ENCODE measurements at regions of chr1 and their contacts with region 1.

Region 1: DNA sequence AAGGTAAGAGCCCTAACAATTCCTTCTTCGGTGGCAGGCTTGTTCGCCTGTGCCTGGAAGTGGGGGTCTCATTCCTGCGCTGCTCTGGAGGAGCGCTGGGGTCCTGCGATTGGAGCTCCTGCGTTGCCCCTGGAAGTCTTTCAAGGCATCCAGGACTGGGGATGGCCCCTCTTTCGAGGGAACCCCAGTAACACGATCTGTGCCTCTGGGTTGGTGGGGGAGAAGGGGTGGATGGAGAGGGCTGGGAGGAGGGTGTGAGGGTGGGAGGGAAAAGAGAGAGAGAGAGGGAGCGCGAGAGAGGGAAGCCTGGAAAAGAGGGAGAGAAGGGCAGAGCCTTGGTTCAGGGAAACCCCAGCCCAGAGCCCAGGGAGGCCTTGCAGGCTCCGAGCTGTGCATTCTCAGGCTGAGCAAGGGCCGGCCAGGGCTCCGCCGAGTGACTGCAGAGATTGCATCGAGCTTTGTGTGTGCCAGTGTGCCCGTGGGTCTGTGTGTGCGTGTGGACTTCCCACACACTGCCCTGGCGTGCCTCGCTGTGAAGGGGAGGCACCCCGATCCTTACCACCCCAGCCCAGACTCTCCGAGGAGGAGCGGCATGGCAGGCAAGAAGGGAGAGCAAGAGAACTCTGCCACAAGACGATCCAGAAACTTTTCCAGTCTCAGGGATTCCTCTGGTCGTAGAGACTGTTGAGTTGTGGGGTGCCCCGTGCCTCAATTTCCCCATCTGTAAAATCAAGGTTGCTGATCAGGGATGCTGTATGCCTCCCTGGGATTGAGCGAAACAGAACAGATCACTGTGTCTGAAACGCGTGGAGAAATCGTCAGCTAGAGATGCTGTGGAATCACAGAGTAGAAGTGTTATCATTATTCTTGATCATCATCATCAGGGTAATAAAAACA is 619 bp downstream of the BCL9 start:
- DNase-seq: peak; percentile 46 to 58 (median 52)
- ATAC-seq: peak; percentile 49
- H3K4me3 ChIP-seq: peak overlapping the region; percentile 34 to 41
- H3K27ac ChIP-seq: peak overlapping the region; percentile 79 to 90 (median 81)
- H3K4me1 ChIP-seq: peaks cover 25% of the 10 kb centered on the region
- H3K27me3 ChIP-seq: no peaks in the 10 kb centered on the region
- CTCF ChIP-seq: no peak
- POLR2A ChIP-seq: peak in 2 of 3 donors; percentile 17 to 44

Region 2: DNA sequence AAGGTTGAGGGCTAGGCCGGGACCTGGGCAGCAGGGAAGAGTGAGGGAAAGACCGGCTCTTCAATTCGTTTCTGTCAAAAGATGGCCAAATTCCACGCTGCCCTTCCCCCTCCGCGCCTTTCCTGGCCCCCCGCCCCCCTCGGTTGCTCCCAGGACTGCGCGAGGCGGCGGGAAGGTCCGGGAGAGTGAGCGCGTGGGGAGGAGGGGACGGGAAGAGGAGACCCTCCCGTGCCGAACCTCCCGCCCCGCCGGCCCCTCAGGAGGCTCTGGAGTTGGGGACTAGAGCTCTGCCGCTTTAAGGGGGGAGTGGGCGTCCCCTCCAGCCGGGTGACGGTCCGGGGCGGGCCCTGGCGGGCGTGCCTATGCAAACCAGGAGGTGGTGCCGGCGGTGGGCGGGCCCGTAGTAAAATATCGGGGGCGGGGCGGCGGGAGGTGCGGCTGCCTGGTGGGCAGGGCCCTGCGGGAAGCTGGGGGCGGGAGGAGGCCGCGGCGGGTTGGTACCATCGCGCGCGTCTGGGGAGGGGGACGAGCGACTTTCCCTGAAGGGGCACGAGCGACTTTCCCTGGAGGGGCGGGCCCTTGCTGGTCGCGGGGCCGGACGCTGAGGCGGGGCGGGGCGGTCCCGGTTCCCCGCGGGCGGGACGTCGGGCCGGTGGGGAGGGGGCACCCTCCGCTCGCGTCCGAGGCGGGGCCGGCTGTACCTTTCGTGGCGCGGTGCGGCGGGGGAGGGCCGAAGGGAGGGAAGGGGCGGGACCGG is 57.6 kb after region 1 on chr1:
- intact Hi-C with region 1: loop called (anchors 5 kb)
- DNase-seq: peak; percentile 98
- ATAC-seq: peak; percentile 89
- H3K4me3 ChIP-seq: peak overlapping the region; percentile 52 to 68
- H3K27ac ChIP-seq: peak overlapping the region; percentile 85 to 93 (median 88)
- H3K4me1 ChIP-seq: peaks cover 17% of the 10 kb centered on the region
- H3K27me3 ChIP-seq: no peaks in the 10 kb centered on the region
- CTCF ChIP-seq: no peak
- POLR2A ChIP-seq: peak; percentile 54 to 84 (median 75)